Common myeloid progenitor, CD34-positive (primary cell): ENCODE measurements at regions of chr14 and their contacts with region 1.

Region 1: GRCh38 chr14:67426983-67427606 is 15.1 kb upstream of the PLEK2 start:
- DNase-seq: peak; percentile 84 to 92 (median 87)
- H3K4me3 ChIP-seq: no peak overlapping the region
- H3K27ac ChIP-seq: no peak overlapping the region
- H3K4me1 ChIP-seq: peaks cover 0 to 25% (median 17%) of the 10 kb centered on the region in 4 experiments
- H3K27me3 ChIP-seq: peaks cover 0 to 15% (median 4%) of the 10 kb centered on the region in 5 experiments

Region 2: DNA sequence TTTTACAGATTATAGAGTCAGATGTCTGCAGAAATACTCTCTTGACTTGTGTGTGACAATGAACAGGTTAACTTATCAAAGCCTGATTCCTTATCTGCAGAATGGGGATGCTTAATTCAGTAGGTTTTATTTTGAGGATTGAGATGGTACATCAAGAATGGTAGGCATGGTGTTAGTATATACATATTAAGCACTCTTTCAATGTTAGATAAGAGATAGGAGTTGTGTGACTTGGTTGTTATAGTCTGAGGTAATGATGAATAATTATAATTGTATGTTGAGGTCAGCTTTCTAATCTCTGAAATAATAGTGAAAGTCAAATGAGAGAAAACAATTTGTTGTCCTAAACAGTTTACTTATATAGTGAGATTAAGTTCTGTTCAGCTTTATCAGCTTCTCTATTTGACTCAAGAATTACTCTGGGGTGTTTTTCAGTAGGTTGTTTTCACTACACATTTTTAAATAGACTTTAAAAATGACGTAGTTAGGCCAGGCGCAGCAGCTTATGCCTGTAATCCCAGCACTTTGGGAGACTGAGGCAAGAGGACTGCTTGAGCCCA is 173.9 kb before region 1 on chr14:
- CTCF ChIA-PET with region 1: no interaction called
- POLR2A ChIA-PET with region 1: no interaction called
- DNase-seq: no peak
- H3K4me3 ChIP-seq: no peak overlapping the region
- H3K27ac ChIP-seq: no peak overlapping the region
- H3K4me1 ChIP-seq: no peaks in the 10 kb centered on the region
- H3K27me3 ChIP-seq: no peaks in the 10 kb centered on the region

Region 3: DNA sequence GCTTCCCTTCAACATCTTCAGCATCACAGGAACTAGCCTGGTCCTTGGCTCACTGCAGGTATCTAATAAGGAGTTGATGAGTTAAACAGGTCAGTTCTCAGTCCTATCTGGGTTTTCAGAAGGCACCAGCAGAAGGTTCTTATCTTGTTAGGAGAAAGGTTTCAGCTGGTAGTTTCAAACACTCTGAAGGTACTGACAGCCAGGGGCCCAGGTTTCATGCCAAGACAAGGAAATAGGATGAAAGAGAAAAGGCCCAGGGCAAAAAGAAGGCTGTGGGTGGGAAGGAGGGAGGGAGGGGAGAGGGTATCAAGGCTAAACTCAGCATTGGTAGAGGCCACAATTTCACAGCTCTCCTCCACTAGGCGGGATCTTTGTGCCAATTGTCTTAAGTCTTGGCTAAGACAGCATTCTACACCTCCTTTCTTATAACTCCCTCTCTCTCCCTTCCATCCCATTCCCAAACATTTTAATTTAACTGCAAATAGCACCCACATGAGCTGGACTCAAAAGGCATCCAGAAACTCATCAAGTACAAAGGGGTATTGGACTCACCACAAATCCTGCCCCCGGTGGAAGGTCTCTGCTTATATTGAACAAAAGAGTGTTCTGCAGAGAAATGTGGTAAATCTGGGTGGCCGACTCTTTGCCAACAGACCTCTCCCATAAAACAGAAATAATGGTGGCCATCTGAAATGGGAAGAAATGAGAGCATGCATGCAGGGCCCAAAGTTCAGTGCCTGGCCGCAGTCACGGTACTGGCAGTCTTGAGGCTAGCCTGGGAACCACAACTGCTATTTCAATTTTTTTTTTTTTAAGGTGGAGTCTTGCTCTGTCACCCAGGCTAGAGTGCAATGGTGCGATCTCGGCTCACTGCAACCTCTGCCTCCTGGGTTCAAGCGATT is 40.3 kb after region 1 on chr14:
- CTCF ChIA-PET with region 1: interaction called, 11 read pairs
- POLR2A ChIA-PET with region 1: interaction called, 3 read pairs
- DNase-seq: peak in 2 of 3 donors; percentile 35 to 36
- H3K4me3 ChIP-seq: no peak overlapping the region
- H3K27ac ChIP-seq: no peak overlapping the region
- H3K4me1 ChIP-seq: no peaks in the 10 kb centered on the region
- H3K27me3 ChIP-seq: no peaks in the 10 kb centered on the region

Region 4: DNA sequence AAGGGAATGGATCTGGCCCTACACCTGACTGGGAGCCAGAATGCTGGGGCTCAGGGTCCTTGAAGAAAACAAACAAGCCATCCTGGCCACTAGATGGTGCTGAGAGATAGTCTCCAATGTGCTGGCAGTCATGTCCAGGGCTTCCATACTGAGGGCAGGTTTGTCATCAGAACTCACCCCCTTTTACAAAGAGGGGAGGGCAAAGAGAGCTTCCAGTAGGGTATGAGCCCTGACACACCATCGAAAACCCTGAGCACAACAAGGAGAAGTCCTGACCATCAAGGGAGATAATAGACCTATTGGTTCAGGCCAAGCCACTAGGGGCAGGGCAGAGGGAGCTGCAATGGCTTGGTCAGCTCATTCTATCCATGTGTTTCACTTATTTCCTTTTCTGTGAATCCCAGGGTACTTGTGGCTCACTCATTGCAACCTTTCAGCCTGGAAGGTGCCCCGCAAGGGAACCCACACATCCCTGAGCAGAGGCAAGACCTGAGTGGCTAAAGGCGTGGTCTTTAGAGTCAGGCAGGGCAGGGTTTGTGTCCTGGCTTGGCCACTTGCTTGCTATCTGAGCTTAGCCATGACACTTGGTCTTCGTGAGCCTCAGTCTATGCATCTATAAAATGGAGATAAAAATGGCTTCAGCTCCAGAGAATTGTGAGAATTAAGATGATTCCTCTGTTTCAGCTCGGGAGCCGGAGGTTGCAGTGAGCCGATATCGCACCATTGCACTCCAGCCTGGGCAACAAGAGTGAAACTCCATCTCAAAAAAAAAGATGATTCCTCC is 99.8 kb after region 1 on chr14:
- CTCF ChIA-PET with region 1: interaction called, 56 read pairs
- POLR2A ChIA-PET with region 1: no interaction called
- DNase-seq: peak; percentile 62 to 76 (median 75)
- H3K4me3 ChIP-seq: no peak overlapping the region
- H3K27ac ChIP-seq: no peak overlapping the region
- H3K4me1 ChIP-seq: peaks cover 0 to 8% (median 6%) of the 10 kb centered on the region in 4 experiments
- H3K27me3 ChIP-seq: peaks cover 4 to 84% (median 45%) of the 10 kb centered on the region in 5 experiments

Region 5: DNA sequence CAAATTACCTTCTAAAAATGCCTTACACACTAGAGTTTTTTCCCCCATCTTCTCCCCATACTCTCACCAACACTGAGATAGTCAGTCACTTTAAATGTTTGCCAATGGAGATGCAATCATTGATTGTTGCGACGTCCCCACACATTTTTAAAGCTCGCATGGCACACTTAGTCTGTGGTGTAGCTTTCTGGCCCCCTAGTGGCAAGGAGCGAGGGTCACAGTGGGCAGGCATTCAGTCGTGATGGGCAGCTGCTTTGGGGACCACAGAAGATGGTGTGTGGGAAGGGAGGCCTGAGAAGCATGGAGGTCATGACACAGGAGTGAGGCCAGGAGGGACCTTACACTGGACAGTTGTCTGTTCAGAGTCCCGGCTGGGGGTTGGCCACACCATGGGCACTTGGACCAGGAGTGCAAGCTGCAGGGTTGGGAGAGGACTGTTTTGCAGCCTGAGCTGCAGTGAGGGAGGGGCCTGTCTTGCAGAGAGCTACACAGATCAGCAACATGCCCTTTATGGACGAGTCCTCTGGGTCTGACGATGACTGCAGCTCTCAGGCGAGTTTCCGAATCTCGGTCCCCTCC is 144.3 kb after region 1 on chr14:
- CTCF ChIA-PET with region 1: interaction called, 238 read pairs
- POLR2A ChIA-PET with region 1: interaction called, 3 read pairs
- DNase-seq: peak; percentile 65 to 76 (median 69)
- H3K4me3 ChIP-seq: no peak overlapping the region
- H3K27ac ChIP-seq: no peak overlapping the region
- H3K4me1 ChIP-seq: no peaks in the 10 kb centered on the region
- H3K27me3 ChIP-seq: peaks cover 0 to 5% (median 0%) of the 10 kb centered on the region in 5 experiments

Region 6: DNA sequence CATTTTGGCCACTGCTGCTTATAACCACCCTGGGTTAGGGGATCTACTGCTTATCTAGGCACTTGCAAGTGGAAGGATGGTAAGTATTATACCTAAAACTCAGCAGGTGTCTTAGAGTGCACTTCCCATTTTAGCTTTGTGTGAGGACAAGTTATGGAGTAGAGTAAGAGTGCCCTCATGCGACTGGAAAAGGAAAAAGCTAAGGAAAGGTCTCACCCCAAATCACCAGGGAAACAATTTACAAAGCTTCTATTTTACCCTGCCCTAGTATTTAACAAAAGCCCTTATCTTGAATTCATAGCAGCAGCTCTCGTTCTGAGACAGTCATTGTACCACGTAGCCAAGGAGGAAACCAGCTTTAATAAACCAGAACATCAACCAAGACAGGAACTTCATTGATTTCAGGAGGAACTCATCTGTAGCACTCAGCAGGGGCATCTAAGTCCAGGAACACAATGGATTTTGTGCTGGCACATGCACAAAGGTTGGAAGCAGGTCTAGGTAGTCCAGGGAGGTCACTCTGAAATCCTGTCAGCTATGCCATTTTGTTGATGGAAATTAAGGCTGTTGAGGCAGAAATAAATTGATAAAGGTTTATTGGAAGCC is 277.5 kb after region 1 on chr14:
- CTCF ChIA-PET with region 1: interaction called, 13 read pairs
- POLR2A ChIA-PET with region 1: no interaction called
- DNase-seq: peak; percentile 78 to 90 (median 85)
- H3K4me3 ChIP-seq: no peak overlapping the region
- H3K27ac ChIP-seq: no peak overlapping the region
- H3K4me1 ChIP-seq: peaks cover 0 to 2% (median 0%) of the 10 kb centered on the region in 4 experiments
- H3K27me3 ChIP-seq: no peaks in the 10 kb centered on the region